ENCODE measurements at regions of chr4 and their contacts with region 1.

Region 1: DNA sequence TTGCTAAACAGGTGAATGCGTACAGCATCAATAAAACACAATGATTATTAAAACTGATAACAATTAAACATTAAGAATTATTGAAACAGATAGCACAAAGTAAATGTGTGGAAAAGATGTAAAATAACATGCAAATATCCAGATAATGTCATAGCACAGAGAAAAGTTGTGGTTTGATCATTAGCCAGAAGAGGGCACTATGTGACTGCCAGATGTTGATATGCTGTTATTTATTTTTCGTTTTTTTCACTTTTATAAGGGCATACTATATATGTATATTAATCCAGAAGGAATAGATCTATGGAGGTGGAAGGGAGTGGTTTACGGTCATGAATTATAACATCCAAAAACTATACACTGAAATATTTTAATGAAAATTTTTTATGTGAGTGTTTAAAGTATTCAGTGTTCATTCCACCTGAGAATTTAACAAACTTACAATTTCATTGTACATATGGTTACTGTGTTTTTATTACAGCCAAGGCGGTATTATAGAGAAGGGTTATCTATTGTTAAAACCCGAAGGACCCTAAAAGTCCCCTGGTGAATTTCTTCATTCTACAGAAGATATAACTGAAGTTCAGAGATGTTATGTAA is 211.9 kb upstream of the UGT8 start:
- DNase-seq: no peak
- ATAC-seq: no peak

Region 2: GRCh38 chr4:113781439-113782040 is 605.2 kb before region 1 on chr4:
- intact Hi-C with region 1: loop called (anchors 10 kb)
- DNase-seq: no peak
- ATAC-seq: no peak

Region 3: GRCh38 chr4:113952452-113953029 is 434.2 kb before region 1 on chr4:
- intact Hi-C with region 1: loop called (anchors 10 kb)
- DNase-seq: no peak
- ATAC-seq: peak; percentile 57

Region 4: DNA sequence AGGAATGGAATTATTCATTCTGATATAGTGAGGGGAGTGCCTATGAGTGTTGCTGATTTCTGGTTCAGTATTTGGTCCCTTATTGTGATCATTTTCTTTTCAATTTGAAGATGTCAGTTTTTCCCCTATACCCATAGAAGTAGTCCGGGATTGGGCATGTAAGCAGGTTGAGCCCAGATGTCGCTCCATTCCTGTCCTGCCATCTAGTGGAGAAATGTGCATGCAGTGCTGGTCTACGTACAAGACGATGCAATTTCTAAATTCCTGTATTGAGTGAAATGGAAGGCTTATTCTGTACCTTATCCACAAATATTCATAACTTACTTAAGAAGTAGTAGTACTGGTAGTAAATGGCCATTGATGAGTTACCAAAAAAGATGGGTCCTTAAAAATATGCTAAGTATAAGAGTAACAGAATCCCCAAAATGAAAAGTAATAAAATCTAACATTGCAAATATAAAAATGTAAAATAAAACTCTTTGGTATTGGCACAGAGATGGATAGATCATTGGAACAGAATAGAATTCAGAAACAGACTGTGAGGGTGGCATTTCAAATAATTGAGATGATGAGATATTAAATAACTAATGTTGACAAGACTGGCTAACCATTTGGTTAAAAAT is 272.8 kb after region 1 on chr4:
- intact Hi-C with region 1: loop called (anchors 2 kb)
- DNase-seq: no peak
- ATAC-seq: peak; percentile 77

Region 5: DNA sequence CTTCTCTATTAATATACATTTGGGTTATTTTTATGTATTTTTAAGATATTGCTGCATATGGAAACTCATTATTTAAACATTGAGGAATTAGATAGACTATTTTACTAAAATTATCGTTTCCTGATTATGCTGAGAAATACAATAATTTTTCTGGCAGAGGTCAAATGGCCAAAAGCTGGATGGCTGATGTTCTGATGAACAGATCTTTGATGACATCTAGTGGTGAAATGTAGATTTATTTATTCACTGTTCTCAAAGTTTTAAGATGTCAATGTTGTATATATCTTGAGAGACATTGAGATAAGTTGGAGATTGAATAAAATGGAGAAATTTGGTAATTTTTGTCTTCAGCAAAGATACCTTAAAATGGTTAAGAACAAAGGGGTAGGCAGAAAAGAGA is 308.0 kb after region 1 on chr4:
- intact Hi-C with region 1: loop called (anchors 2 kb)
- DNase-seq: no peak
- ATAC-seq: no peak